WTC11 (cell line): ENCODE measurements at regions of chr15 and their contacts with region 1.

Region 1: DNA sequence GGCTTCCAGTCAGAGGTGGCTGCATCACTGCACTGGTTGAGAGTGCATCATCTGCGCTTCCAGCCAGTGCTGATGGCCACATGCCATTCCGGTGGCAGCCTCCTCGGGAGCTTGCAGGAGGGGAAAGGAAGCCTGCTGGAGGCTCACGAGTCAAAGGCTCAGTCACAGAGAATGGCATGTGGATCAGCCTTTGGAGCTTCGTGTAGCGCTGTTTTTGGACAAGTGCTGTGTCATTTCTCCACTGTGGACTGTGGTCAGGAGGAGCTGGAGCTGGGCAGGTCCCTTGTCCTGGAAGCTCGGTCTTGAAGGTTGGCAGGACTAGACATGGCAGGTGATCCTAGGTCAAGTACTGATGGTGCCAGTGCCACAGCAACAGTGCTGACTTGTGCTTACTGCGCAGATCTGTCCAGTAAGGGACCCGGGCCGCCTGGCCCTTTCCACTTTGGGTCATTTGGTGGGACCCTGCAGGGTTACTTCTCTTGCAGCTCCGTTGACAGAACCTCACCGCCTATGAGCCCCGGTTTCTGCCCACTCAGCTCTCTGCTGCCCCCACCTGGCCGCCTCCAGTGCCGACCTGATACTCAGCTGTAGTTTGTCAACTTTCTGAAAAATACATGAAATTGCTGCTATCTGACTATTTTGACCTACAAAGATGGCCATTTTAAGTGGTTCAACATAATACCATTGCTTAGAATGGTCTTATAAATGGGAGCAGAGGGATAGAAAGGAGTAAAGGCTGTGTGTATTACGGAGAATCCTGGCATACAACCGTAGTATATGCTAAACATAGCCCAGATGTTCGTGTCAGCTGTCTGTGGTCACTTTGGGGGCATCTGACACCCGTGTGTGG is 27.6 kb upstream of the TRPM1 start:
- DNase-seq: peak; percentile 88
- ATAC-seq: peak; percentile 91
- H3K4me3 Mint-ChIP-seq: no peak overlapping the region
- H3K27ac Mint-ChIP-seq: no peak overlapping the region
- H3K4me1 Mint-ChIP-seq: peaks cover 4% of the 10 kb centered on the region; the same call in 1 of the 2 replicates
- H3K27me3 Mint-ChIP-seq: no peaks in the 10 kb centered on the region
- CTCF ChIP-seq: peak; percentile 95

Region 2: GRCh38 chr15:30859091-30859874 is 269.9 kb before region 1 on chr15:
- CTCF ChIA-PET with region 1: interaction called, 20 read pairs
- POLR2A ChIA-PET with region 1: no interaction called
- DNase-seq: no peak
- ATAC-seq: no peak; the same call in 1 of the 2 replicates
- H3K4me3 Mint-ChIP-seq: no peak overlapping the region
- H3K27ac Mint-ChIP-seq: no peak overlapping the region
- H3K4me1 Mint-ChIP-seq: no peaks in the 10 kb centered on the region; the same call in 1 of the 2 replicates
- H3K27me3 Mint-ChIP-seq: no peaks in the 10 kb centered on the region
- CTCF ChIP-seq: peak; percentile 51; the same call in 1 of the 2 replicates

Region 3: GRCh38 chr15:30922480-30923311 is 206.4 kb before region 1 on chr15:
- CTCF ChIA-PET with region 1: interaction called, 17 read pairs
- POLR2A ChIA-PET with region 1: no interaction called
- DNase-seq: peak; percentile 40
- ATAC-seq: peak; percentile 93
- H3K4me3 Mint-ChIP-seq: peak overlapping the region; percentile 8; the same call in 1 of the 2 replicates
- H3K27ac Mint-ChIP-seq: peak overlapping the region; percentile 97
- H3K4me1 Mint-ChIP-seq: peaks cover 37% of the 10 kb centered on the region
- H3K27me3 Mint-ChIP-seq: no peaks in the 10 kb centered on the region
- CTCF ChIP-seq: no peak

Region 4: DNA sequence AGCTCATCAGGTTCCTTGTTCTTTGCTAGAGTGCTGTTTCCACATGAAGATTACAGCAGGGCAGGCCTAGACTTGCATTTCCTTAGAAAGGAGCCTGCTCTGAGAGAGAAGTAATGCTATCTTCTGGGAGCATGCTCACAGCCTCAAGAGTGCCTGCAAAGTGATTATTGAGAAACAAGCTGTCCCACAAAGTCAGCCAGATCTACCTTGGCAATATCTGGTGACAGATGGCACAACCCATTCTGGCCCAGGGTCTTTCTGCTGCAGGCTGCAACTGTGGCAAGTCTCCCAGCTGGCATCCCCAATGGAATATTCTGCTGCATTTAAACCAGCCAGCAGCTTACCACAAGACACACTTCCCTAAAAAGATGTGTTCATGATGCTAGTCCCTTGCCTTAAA is 167.1 kb before region 1 on chr15:
- CTCF ChIA-PET with region 1: interaction called, 13 read pairs
- POLR2A ChIA-PET with region 1: interaction called, 3 read pairs
- DNase-seq: no peak
- ATAC-seq: no peak
- H3K4me3 Mint-ChIP-seq: no peak overlapping the region
- H3K27ac Mint-ChIP-seq: peak overlapping the region; percentile 70; the same call in 1 of the 2 replicates
- H3K4me1 Mint-ChIP-seq: peaks cover 12% of the 10 kb centered on the region
- H3K27me3 Mint-ChIP-seq: no peaks in the 10 kb centered on the region
- CTCF ChIP-seq: no peak

Region 5: GRCh38 chr15:31013538-31014228 is 115.5 kb before region 1 on chr15:
- CTCF ChIA-PET with region 1: interaction called, 11 read pairs
- POLR2A ChIA-PET with region 1: no interaction called
- DNase-seq: no peak
- ATAC-seq: peak; percentile 41
- H3K4me3 Mint-ChIP-seq: no peak overlapping the region
- H3K27ac Mint-ChIP-seq: 0 out of 2 replicates have a peak overlapping the region, but pooled peaks have one; percentile 43
- H3K4me1 Mint-ChIP-seq: peaks cover 19% of the 10 kb centered on the region
- H3K27me3 Mint-ChIP-seq: no peaks in the 10 kb centered on the region
- CTCF ChIP-seq: no peak

Region 6: GRCh38 chr15:31111091-31111647 is 18.0 kb before region 1 on chr15:
- CTCF ChIA-PET with region 1: interaction called, 25 read pairs
- POLR2A ChIA-PET with region 1: no interaction called
- DNase-seq: no peak
- ATAC-seq: no peak
- H3K4me3 Mint-ChIP-seq: no peak overlapping the region
- H3K27ac Mint-ChIP-seq: no peak overlapping the region
- H3K4me1 Mint-ChIP-seq: no peaks in the 10 kb centered on the region
- H3K27me3 Mint-ChIP-seq: no peaks in the 10 kb centered on the region
- CTCF ChIP-seq: no peak

Region 7: DNA sequence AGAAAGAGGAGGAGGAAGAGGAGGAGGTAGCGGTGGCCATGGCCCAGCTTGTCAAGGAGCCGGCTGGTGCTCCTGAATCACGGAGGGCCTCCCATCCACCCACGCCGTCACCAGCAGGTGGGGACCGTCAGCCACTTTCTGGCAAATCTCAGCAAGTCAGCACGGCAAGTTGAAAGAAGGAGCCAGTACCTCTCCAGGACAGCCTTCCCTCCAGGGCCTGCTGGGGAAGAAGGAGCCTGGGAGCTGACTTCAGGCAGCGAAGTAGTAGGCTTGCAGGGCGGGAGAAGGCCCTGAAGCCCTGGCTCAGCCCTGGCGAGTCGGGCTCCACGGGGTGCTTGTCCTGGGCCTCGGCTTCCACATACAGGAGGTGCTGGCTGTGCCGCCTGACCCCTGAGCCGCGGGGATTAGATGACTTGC is 71.6 kb after region 1 on chr15:
- CTCF ChIA-PET with region 1: interaction called, 12 read pairs
- POLR2A ChIA-PET with region 1: no interaction called
- DNase-seq: peak; percentile 76
- ATAC-seq: peak; percentile 80
- H3K4me3 Mint-ChIP-seq: no peak overlapping the region
- H3K27ac Mint-ChIP-seq: no peak overlapping the region
- H3K4me1 Mint-ChIP-seq: peaks cover 14% of the 10 kb centered on the region
- H3K27me3 Mint-ChIP-seq: no peaks in the 10 kb centered on the region
- CTCF ChIP-seq: no peak